ENCODE measurements at regions of chr19 and their contacts with region 1.

Region 1: GRCh38 chr19:39532233-39533002 is at the start of gene EID2B:
- DNase-seq: peak; percentile 91 to 99
- H3K4me3 ChIP-seq: peak within 1 kb of the TSS; percentile 62
- CTCF ChIP-seq: peak in 2 of 3 donors; percentile 93 to 97
- POLR2A ChIP-seq: peak in 1 of 2 donors; percentile 13
- total RNA-seq, gene EID2B: 0.56 to 1.5 (median 1.0) TPM

Region 2: GRCh38 chr19:39445265-39446111 is 86.9 kb before region 1 on chr19 and contains the start of gene SUPT5H:
- intact Hi-C with region 1: loop called (anchors 10 kb)
- DNase-seq: peak; percentile 96 to 99
- H3K4me3 ChIP-seq: peak within 1 kb of the TSS; percentile 96
- CTCF ChIP-seq: no peak
- POLR2A ChIP-seq: peak in 1 of 2 donors; percentile 61
- total RNA-seq, gene SUPT5H: 70.0 to 102 (median 77.3) TPM

Measured in lower leg skin (tissue), 4 donors.